Esophagus squamous epithelium (tissue), 5 donors: ENCODE measurements at regions of chr10 and their contacts with region 1.

Region 1: GRCh38 chr10:21732067-21732772 is 198.2 kb downstream of the MLLT10 start:
- DNase-seq: no peak
- H3K4me3 ChIP-seq: no peak overlapping the region
- H3K27ac ChIP-seq: no peak overlapping the region
- H3K4me1 ChIP-seq: peaks cover 0 to 39% (median under 1%) of the 10 kb centered on the region in 3 donors
- H3K27me3 ChIP-seq: no peaks in the 10 kb centered on the region
- CTCF ChIP-seq: peak in 5 of 6 experiments; percentile 65 to 82 (median 80)
- POLR2A ChIP-seq: no peak

Region 2: DNA sequence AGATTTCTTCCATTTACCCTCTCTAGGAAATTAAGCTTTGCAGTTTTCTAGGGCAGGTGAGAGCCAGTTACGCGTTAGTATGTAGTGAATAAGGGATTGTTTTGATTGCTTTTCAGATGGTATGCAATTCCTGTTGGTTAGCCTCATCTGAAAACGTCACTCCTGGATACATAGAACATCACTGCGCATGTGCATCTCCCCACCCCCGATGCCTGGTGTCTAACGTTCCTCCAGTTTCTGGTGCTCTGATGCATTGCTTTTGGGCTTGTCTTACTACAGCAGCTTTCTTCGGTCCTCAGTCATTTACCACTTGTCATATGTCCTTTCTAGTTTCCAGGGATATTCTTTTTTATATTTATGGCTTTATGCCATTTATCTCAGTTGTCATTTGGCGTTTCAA is 175.7 kb before region 1 on chr10:
- intact Hi-C with region 1: loop called (anchors 10 kb)
- DNase-seq: no peak
- H3K4me3 ChIP-seq: no peak overlapping the region
- H3K27ac ChIP-seq: no peak overlapping the region
- H3K4me1 ChIP-seq: peaks cover 0 to 20% (median 9%) of the 10 kb centered on the region in 3 donors
- H3K27me3 ChIP-seq: no peaks in the 10 kb centered on the region
- CTCF ChIP-seq: no peak
- POLR2A ChIP-seq: no peak